Activated CD4-positive, alpha-beta memory T cell treated with anti-CD3 and anti-CD28 coated beads for 36 hours (primary cell): ENCODE measurements at regions of chr2 and their contacts with region 1.

Region 1: GRCh38 chr2:73212448-73213176 is 1.4 kb upstream of the SMYD5 start:
- DNase-seq: peak; percentile 86
- H3K4me3 Mint-ChIP-seq: no peak overlapping the region
- H3K27ac Mint-ChIP-seq: no peak overlapping the region
- H3K4me1 Mint-ChIP-seq: peaks cover 39% of the 10 kb centered on the region
- H3K27me3 Mint-ChIP-seq: peaks cover 5% of the 10 kb centered on the region

Region 2: DNA sequence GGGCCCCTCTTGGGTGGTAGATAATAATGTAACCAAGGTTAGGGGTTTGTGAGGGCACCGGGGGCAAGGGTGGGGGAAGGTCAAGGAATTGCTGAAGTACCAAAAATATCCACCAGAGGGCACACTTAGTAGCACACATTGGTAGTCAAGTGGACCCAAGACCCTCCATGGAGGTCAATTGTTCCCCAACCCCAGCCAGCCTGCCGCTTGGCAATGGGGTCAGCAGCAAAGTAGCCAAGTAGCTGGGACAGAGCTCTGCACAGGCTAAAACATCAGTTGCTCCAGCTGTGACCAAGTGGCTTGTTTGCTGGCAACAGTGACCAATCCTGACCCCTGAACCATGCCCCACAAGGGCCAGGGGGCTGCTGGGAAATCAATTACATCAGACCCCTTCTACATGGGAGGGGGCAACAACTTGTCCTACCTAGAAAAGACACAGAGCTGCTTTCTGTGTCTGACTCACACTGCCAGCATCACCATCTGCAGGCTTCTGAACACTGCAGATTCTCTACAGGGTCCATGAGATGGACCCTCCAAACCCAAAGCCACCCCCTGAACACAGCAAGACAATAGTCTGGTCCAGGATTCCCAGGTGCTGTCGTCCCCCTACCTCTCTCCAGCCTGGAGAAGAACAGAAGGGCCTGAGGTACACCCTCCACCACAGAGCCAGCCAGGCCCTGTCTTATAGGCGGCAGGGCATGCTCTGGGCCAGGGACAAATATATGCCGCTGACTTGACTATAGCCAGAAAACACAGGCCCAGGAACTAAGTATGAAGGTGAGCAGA is 219.3 kb before region 1 on chr2:
- CTCF ChIA-PET with region 1: interaction called, 20 read pairs
- POLR2A ChIA-PET with region 1: no interaction called
- intact Hi-C with region 1: no loop called
- DNase-seq: peak; percentile 40
- H3K4me3 Mint-ChIP-seq: no peak overlapping the region
- H3K27ac Mint-ChIP-seq: no peak overlapping the region
- H3K4me1 Mint-ChIP-seq: no peaks in the 10 kb centered on the region
- H3K27me3 Mint-ChIP-seq: no peaks in the 10 kb centered on the region

Region 3: DNA sequence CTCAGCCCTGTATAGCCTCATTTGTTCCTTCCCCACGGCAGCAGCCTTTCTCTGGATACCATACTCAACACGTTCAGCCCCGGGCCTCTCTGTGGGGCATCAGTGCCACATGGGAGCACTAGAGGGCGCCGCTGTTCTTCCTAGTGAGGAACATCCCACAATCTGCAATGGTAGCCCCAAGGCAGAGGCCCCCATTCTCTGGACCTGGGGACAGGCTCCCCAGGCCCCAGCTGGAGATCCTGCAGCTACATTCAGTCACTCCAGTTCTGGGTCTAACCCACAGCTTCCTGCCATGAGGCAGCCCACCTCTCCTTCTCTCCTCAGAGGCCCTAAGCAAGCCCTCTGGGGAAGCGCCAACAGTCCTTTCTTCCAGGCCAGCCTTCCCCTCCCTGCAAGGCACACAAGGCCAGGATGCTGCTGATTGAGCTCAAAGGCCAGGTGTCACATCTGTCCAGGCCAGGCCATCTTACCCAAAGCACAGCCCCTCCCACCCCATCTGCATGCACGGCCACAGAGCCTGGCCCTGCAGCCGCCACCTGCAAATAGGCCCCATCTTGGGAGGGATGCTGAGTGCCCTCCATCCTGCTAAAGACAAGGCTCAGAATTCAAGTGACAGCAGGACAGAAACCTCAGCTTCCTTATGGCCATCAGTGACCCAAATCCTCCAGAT is 126.8 kb before region 1 on chr2:
- CTCF ChIA-PET with region 1: interaction called, 42 read pairs
- POLR2A ChIA-PET with region 1: no interaction called
- intact Hi-C with region 1: loop called (anchors 1 kb)
- DNase-seq: peak; percentile 88
- H3K4me3 Mint-ChIP-seq: no peak overlapping the region
- H3K27ac Mint-ChIP-seq: no peak overlapping the region
- H3K4me1 Mint-ChIP-seq: no peaks in the 10 kb centered on the region
- H3K27me3 Mint-ChIP-seq: no peaks in the 10 kb centered on the region

Region 4: GRCh38 chr2:73112913-73113633 is 99.5 kb before region 1 on chr2 and contains the start of gene RAB11FIP5:
- CTCF ChIA-PET with region 1: no interaction called
- POLR2A ChIA-PET with region 1: no interaction called
- intact Hi-C with region 1: loop called (anchors 2 kb)
- DNase-seq: peak; percentile 83
- H3K4me3 Mint-ChIP-seq: peak within 1 kb of the TSS; percentile 81
- H3K27ac Mint-ChIP-seq: no peak within 1 kb of the TSS
- H3K4me1 Mint-ChIP-seq: peaks cover 21% of the 10 kb centered on the region
- H3K27me3 Mint-ChIP-seq: no peaks in the 10 kb centered on the region
- total RNA-seq, gene RAB11FIP5: 11.1 to 11.2 TPM

Region 5: DNA sequence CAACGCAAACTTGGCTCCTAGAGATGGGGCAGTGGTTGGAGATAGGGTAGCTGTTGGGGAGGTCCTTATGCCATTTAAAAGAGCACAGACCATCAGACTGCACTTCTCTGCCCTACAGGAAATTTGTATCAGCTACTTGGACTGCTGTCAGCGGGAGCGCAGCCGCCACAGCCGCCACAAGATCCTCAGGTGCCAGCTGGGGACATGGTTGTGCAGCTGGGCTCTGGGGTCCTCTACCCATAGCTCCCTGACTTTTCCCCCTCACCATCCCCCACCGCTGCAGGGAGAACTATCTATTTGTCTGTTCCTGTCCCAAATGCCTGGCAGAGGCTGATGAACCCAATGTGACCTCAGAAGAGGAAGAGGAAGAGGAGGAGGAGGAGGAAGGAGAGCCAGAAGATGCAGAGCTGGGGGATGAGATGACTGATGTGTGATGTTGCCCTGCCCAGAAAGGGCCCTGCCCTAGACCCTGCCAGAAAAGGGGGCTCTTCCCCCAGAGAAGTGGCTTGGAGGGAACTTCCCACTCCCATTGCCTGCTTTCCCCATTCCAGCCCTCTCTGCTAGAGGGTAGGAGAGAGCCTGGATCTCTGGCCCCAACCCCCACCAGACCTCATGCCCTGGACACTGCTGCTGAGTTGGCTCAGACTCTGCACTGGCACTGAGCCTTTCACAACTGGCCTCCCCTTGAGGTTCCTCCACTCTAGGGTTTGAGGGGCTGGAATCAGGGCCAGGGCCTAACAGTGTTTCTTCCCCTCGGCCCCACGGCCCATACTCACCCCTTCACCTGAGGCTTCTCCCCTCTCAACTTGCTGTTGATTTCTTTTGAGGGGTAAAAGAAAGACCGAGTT is 13.1 kb after region 1 on chr2:
- CTCF ChIA-PET with region 1: interaction called, 26 read pairs
- POLR2A ChIA-PET with region 1: interaction called, 4 read pairs
- intact Hi-C with region 1: no loop called
- DNase-seq: no peak
- H3K4me3 Mint-ChIP-seq: no peak overlapping the region
- H3K27ac Mint-ChIP-seq: no peak overlapping the region
- H3K4me1 Mint-ChIP-seq: no peaks in the 10 kb centered on the region
- H3K27me3 Mint-ChIP-seq: no peaks in the 10 kb centered on the region

Region 6: GRCh38 chr2:73233154-73233931 is 20.7 kb after region 1 on chr2 and contains the start of gene PRADC1:
- CTCF ChIA-PET with region 1: interaction called, 33 read pairs
- POLR2A ChIA-PET with region 1: interaction called, 32 read pairs
- intact Hi-C with region 1: loop called (anchors 1 kb)
- DNase-seq: peak; percentile 97
- H3K4me3 Mint-ChIP-seq: peak within 1 kb of the TSS; percentile 87
- H3K27ac Mint-ChIP-seq: peak within 1 kb of the TSS; percentile 80
- H3K4me1 Mint-ChIP-seq: peaks cover 29% of the 10 kb centered on the region
- H3K27me3 Mint-ChIP-seq: peaks cover 1% of the 10 kb centered on the region
- total RNA-seq, gene PRADC1: 12.9 to 13.6 TPM

Region 7: GRCh38 chr2:73293534-73294171 is 81.0 kb after region 1 on chr2 and contains the start of gene EGR4:
- CTCF ChIA-PET with region 1: interaction called, 13 read pairs
- POLR2A ChIA-PET with region 1: no interaction called
- intact Hi-C with region 1: loop called (anchors 5 kb)
- DNase-seq: peak; percentile 93
- H3K4me3 Mint-ChIP-seq: peak within 1 kb of the TSS; percentile 68
- H3K27ac Mint-ChIP-seq: no peak within 1 kb of the TSS
- H3K4me1 Mint-ChIP-seq: peaks cover 7% of the 10 kb centered on the region
- H3K27me3 Mint-ChIP-seq: peaks cover 64% of the 10 kb centered on the region
- total RNA-seq, gene EGR4: 0.24 to 0.34 TPM